Ascending aorta (tissue), 2 donors: ENCODE measurements at regions of chr9 and their contacts with region 1.

Region 1: GRCh38 chr9:111298731-111299598 is 31.1 kb downstream of the OR2K2 start:
- DNase-seq: peak in 1 of 2 donors; percentile 73
- H3K4me3 ChIP-seq: peak overlapping the region in 1 of 2 donors; percentile 50
- H3K27ac ChIP-seq: peak overlapping the region; percentile 49 to 78
- H3K4me1 ChIP-seq: peaks cover 0 to 4% of the 10 kb centered on the region in 2 donors
- H3K27me3 ChIP-seq: no peaks in the 10 kb centered on the region
- CTCF ChIP-seq: peak; percentile 70 to 75 (median 73)

Region 2: DNA sequence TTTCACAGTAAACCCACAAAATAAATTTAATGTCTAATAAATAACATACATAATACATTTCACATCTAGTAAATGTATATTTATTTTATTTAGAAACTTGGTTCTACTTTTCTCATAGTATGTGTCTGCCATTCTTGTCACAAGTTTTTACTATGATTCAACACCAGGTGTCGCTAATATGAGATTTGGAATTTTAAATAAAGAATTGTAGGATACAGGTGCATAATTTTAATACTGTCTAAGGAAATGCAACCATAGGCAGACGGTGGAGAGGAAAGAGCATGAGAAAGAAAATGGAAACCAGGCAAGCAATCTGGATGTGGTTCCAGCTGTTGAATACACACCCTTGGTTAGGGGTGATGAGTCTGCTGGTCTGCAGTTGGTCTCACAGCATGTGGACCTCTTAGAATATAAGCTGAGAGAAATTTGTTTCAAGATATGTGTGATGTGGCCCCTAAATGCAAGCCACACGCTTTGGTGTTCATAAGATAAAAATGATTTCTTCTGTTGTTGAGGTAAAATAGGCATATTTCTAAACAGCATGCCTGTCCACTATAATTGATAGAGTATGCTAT is 846.7 kb before region 1 on chr9:
- intact Hi-C with region 1: loop called (anchors 10 kb)
- DNase-seq: no peak
- H3K4me3 ChIP-seq: no peak overlapping the region
- H3K27ac ChIP-seq: no peak overlapping the region
- H3K4me1 ChIP-seq: no peaks in the 10 kb centered on the region
- H3K27me3 ChIP-seq: no peaks in the 10 kb centered on the region
- CTCF ChIP-seq: peak; percentile 26 to 57 (median 36)

Region 3: DNA sequence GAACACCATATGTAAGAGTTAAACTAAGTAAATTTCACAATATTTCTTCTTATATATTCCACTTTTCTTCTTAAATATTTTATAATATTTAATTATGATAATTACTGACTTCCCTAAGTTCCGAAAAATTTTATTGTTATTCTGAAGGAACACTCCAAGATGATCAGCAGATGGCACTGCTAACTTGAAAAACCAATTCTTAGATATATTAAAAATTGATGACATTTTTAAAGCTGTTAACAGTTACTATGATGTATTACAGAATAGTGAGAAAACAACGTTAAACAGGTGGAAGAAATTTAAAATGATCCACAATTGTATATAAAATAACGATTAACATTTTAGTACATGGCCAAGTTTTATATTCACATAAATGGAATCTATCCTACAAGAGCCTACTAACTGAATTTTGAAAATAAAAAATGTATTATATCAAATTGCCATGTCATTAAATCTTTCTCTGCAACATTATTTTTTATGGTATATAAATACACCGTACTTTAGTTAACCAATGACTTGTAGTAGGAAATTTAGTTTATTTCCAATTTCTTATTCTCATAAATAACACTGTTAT is 660.5 kb before region 1 on chr9:
- intact Hi-C with region 1: loop called (anchors 1 kb)
- DNase-seq: no peak
- H3K4me3 ChIP-seq: no peak overlapping the region
- H3K27ac ChIP-seq: no peak overlapping the region
- H3K4me1 ChIP-seq: no peaks in the 10 kb centered on the region
- H3K27me3 ChIP-seq: no peaks in the 10 kb centered on the region
- CTCF ChIP-seq: peak; percentile 41 to 68 (median 51)